ENCODE measurements at regions of chr12 and their contacts with region 1.

Region 1: GRCh38 chr12:42129595-42130204 is 15.0 kb downstream of the GXYLT1 start:
- DNase-seq: peak; percentile 54
- H3K4me3 ChIP-seq: no peak overlapping the region; a peak in 1 of 4 replicates
- H3K27ac ChIP-seq: no peak overlapping the region
- H3K4me1 ChIP-seq: peaks cover 8 to 19% of the 10 kb centered on the region in 2 experiments; a peak in 3 of 4 replicates
- H3K27me3 ChIP-seq: no peaks in the 10 kb centered on the region
- CTCF ChIP-seq: peak; percentile 96
- EP300 ChIP-seq: no peak
- RAD21 ChIP-seq: peak; percentile 98

Region 2: GRCh38 chr12:42119085-42119633 is 10.5 kb before region 1 on chr12:
- CTCF ChIA-PET with region 1: interaction called, 10 read pairs
- POLR2A ChIA-PET with region 1: no interaction called
- DNase-seq: no peak
- H3K4me3 ChIP-seq: no peak overlapping the region
- H3K27ac ChIP-seq: peak overlapping the region in 1 of 2 experiments; percentile 28; a peak in 2 of 4 replicates
- H3K4me1 ChIP-seq: no peaks in the 10 kb centered on the region; a peak in 1 of 4 replicates
- H3K27me3 ChIP-seq: no peaks in the 10 kb centered on the region
- CTCF ChIP-seq: no peak
- EP300 ChIP-seq: no peak
- RAD21 ChIP-seq: no peak

Measured in SK-N-SH (cell line).